ENCODE measurements at regions of chr1 and their contacts with region 1.

Region 1: GRCh38 chr1:17125756-17126237 is 6.5 kb upstream of the PADI2 start:
- DNase-seq: peak; percentile 84
- H3K4me3 ChIP-seq: no peak overlapping the region
- H3K27ac ChIP-seq: no peak overlapping the region
- H3K4me1 ChIP-seq: no peaks in the 10 kb centered on the region
- H3K27me3 ChIP-seq: no peaks in the 10 kb centered on the region
- CTCF ChIP-seq: peak; percentile 92 to 98 (median 96)
- POLR2A ChIP-seq: no peak

Region 2: DNA sequence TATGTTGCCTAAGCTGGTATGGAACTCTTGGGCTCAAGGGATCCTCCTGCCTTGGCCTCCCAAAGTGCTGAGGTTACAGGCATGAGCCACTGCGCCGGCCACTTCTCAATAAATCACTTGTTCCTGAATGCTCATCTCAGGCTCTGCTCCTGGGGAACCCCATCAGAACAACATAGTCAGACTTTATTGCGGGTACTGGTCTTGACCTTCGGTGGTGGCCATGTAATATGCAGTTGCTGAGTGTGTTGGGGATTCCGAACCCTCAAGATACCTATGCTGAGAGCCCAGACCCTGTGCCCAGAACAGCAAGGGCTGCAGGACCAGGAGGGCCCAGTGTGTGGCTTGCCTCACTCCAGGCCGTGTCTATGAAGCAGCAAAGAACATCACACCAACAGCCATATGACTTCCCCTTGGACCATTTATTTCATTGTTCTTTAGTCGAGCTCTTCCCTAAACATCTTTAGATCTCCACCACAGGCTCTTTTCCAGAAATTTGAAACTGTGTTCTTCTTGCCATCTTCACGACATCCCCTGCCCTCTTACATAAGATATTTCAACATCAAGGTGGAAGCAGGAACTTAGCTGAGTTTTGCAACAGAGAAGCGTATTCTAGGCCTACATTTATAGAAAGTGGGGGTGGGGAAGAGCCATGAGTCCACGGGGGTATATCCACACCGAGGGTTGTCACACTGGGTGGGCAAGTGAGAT is 59.3 kb before region 1 on chr1:
- intact Hi-C with region 1: no loop called
- DNase-seq: no peak
- H3K4me3 ChIP-seq: no peak overlapping the region
- H3K27ac ChIP-seq: no peak overlapping the region
- H3K4me1 ChIP-seq: no peaks in the 10 kb centered on the region
- H3K27me3 ChIP-seq: no peaks in the 10 kb centered on the region
- CTCF ChIP-seq: no peak
- POLR2A ChIP-seq: no peak

Region 3: DNA sequence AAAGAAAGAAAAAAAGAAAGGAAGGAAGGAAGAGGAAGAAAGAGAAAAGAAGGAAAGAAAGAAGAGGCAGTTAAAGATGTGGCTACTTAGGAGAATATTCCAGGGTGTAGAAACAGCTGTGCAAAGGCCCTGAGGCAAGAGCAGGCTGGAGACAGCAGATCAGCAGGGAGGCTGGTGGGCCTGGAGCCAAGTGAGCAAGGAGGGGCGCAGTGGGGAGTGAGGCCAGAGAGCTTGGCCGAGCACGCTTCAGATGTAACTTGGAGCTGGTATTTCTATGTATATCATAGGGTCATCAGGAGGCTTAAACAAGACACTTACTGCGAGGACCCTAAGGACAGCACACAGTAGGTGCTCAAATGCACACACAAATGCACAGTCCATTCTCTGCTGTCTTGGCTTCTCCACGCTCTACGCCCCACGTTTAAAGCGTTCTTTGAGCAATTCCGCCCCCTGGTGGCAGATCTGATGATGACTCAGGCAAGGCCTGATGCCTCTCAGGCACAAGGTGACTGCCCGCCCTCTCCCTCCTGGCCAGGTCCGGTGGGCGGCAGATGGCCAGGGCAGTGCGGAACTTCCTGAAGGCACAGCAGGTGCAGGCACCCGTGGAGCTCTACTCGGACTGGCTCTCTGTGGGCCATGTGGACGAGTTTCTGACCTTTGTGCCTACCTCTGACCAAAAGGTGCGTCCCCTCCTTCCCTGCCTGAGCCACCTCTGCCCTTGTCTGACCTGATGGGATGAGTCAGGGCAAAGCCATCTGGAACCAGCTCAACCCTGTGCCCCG is 111.2 kb after region 1 on chr1:
- intact Hi-C with region 1: loop called (anchors 2 kb)
- DNase-seq: peak; percentile 83
- H3K4me3 ChIP-seq: no peak overlapping the region
- H3K27ac ChIP-seq: no peak overlapping the region
- H3K4me1 ChIP-seq: peaks cover 5% of the 10 kb centered on the region
- H3K27me3 ChIP-seq: no peaks in the 10 kb centered on the region
- CTCF ChIP-seq: peak; percentile 75 to 96 (median 90)
- POLR2A ChIP-seq: no peak

Region 4: DNA sequence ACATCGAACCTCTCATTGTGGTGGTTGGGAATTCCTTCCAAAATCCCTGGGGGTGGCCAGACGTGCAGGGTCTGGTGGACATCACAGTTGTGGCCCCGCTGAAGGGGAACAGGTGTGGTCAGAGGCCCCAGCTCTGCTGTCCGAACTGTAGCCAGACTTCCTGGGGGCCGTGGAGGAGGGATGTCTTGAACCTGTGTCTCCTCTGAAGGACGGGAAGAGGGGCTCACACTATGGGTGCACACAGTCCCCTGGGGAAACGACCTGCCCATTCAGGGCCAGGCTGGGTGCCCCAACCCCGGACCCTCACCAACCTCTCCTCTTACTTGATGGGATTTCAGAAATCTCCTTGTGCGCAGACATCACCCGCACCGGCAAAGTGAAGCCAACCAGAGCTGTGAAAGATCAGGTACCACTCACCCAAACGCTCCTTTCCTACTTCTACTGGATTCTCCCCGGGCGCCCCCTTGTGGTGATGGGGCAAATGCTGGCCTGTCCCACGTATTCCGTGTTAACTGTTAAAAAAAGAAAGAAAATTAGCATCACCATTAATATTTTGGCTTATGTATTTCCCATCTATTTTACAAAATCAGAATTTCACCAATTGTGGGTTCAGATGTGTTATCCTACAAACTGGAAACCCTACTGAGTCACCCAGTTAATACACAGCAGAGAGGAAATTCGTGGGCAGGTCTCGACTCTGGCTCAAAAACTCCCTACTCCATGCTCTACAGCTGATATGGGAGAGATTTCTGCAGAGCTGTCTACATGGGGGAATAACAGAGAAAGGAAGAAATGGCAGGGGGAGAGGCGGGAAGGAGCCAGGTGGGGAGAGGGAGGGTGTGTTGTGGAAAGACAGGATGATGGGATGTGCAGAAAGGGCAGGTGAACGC is 210.3 kb after region 1 on chr1:
- intact Hi-C with region 1: loop called (anchors 10 kb)
- DNase-seq: peak; percentile 66
- H3K4me3 ChIP-seq: no peak overlapping the region
- H3K27ac ChIP-seq: no peak overlapping the region
- H3K4me1 ChIP-seq: no peaks in the 10 kb centered on the region
- H3K27me3 ChIP-seq: no peaks in the 10 kb centered on the region
- CTCF ChIP-seq: peak; percentile 72 to 84 (median 74)
- POLR2A ChIP-seq: no peak